ENCODE measurements at regions of chr16 and their contacts with region 1.

Region 1: GRCh38 chr16:8391257-8391656 is 199.1 kb downstream of the TMEM114 start:
- DNase-seq: no peak
- ATAC-seq: no peak
- H3K4me3 ChIP-seq: no peak overlapping the region
- H3K27ac ChIP-seq: no peak overlapping the region
- H3K4me1 ChIP-seq: no peaks in the 10 kb centered on the region
- H3K27me3 ChIP-seq: no peaks in the 10 kb centered on the region
- CTCF ChIP-seq: no peak
- EP300 ChIP-seq: no peak
- POLR2A ChIP-seq: no peak
- RAD21 ChIP-seq: no peak

Region 2: DNA sequence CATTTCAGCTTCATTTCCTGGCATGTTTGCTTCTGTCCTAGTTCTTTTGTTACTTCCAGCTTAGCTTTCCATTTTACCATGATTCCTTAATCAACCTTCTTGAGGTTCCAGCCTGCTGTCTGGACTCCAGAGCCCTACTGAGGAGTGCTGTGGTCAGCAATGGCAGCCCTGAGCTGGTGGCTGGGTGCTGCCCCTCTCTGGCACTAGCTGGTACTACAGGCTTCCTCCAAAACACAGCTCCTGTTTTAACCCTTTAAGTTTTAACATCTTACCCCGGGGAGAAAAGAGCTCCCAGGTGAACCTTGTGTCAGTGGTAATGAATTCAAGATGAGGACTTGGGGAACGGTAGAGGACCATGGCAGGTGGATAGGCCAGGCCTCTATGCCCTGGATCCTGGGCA is 196.5 kb before region 1 on chr16:
- CTCF ChIA-PET with region 1: no interaction called
- POLR2A ChIA-PET with region 1: no interaction called
- RAD21 ChIA-PET with region 1: no interaction called
- SMC1A ChIA-PET with region 1: no interaction called
- in situ Hi-C with region 1: no loop called
- intact Hi-C with region 1: no loop called
- DNase-seq: no peak
- ATAC-seq: no peak
- H3K4me3 ChIP-seq: no peak overlapping the region
- H3K27ac ChIP-seq: no peak overlapping the region
- H3K4me1 ChIP-seq: no peaks in the 10 kb centered on the region
- H3K27me3 ChIP-seq: no peaks in the 10 kb centered on the region
- CTCF ChIP-seq: peak in 2 of 3 experiments; percentile 7 to 29; a peak in 1 of 6 replicates
- EP300 ChIP-seq: no peak
- POLR2A ChIP-seq: no peak
- RAD21 ChIP-seq: no peak

Region 3: GRCh38 chr16:8436931-8437330 is 45.7 kb after region 1 on chr16:
- CTCF ChIA-PET with region 1: no interaction called
- POLR2A ChIA-PET with region 1: no interaction called
- RAD21 ChIA-PET with region 1: no interaction called
- SMC1A ChIA-PET with region 1: no interaction called
- in situ Hi-C with region 1: no loop called
- intact Hi-C with region 1: no loop called
- DNase-seq: no peak
- ATAC-seq: no peak
- H3K4me3 ChIP-seq: no peak overlapping the region
- H3K27ac ChIP-seq: no peak overlapping the region
- H3K4me1 ChIP-seq: no peaks in the 10 kb centered on the region
- H3K27me3 ChIP-seq: no peaks in the 10 kb centered on the region
- CTCF ChIP-seq: no peak
- EP300 ChIP-seq: no peak
- POLR2A ChIP-seq: no peak
- RAD21 ChIP-seq: no peak

Region 4: DNA sequence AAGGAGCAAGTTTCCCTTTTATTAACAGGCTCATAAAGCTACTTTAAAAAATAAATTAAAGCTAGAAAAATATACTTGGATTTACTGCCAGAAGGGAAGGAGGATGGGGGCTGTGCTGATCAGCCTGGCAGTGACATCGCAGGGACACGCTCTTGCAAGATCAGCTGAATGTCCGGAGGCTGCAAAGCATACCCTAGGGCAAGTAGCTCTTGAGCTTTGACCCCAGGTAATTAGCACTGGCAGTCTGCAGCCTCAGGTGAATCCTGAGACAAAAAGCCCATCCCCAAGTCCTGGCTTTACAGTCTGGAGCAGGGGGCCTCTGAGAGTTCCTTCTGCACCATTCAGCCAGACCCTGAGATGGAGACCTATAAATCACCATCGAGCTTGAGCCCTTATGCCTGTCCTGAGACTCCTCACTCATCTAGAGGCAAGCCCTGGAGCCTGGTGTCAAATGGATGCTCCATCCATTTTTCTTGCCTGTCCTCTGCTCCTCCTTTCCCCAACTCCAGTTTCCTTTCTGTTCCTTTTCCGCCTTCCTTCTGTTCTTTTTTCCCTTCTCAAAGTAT is 67.3 kb after region 1 on chr16:
- CTCF ChIA-PET with region 1: no interaction called
- POLR2A ChIA-PET with region 1: no interaction called
- RAD21 ChIA-PET with region 1: no interaction called
- SMC1A ChIA-PET with region 1: no interaction called
- in situ Hi-C with region 1: loop called (anchors 10 kb)
- intact Hi-C with region 1: no loop called
- DNase-seq: no peak
- ATAC-seq: no peak
- H3K4me3 ChIP-seq: no peak overlapping the region
- H3K27ac ChIP-seq: no peak overlapping the region
- H3K4me1 ChIP-seq: no peaks in the 10 kb centered on the region
- H3K27me3 ChIP-seq: no peaks in the 10 kb centered on the region; a peak in 1 of 4 replicates
- CTCF ChIP-seq: no peak
- EP300 ChIP-seq: no peak
- POLR2A ChIP-seq: no peak
- RAD21 ChIP-seq: no peak

Measured in GM12878 (cell line).